ENCODE measurements at regions of chr1 and their contacts with region 1.

Region 1: DNA sequence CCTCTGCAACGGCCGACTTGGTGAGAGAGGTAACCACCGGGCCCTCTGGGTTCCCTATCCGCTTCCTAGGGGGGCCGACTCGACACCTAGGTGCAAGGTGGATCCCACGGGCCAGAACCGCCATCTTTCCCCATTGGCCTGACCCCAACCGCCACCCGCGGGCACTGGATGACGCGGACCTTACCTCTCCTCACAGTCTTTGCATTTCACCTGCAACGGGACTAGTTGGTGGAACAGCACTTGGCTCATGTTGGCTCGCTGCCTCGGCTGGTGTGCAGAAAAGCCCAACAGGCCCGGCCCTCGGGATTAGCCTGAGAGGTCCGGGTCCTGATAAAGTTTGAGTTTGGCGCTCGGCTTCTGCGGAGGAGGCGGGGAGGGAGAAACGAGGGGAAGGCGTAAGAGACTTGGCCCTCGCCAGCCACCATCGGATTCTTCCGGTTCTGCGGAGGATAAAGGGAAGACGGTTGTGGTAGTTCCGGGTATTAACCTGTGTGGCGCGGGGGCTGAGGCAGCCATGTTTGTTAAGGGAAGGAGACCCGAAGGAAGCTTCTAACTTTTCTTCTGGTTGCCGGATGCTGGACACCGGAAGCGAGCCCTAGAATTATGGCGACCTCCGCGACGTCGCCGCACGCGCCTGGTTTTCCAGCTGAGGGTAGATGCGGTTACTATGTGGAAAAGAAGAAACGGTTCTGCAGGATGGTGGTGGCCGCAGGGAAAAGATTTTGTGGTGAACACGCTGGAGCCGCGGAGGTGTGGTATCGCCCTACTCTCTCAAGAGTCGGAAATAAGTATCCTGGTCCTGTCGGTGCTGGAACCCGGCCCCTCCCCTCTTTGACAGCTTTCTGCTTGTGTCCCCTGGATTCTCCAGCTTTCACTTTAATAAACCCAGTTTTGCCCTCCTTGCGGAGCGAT is at the starts of genes SASS6 and TRMT13:
- DNase-seq: peak; percentile 97
- H3K4me3 ChIP-seq: peak within 1 kb of the TSS; percentile 61 to 99 (median 85)
- H3K27ac ChIP-seq: peak within 1 kb of the TSS; percentile 58
- H3K4me1 ChIP-seq: peaks cover 24% of the 10 kb centered on the region
- H3K27me3 ChIP-seq: no peaks in the 10 kb centered on the region
- CTCF ChIP-seq: no peak
- POLR2A ChIP-seq: peak; percentile 80
- total RNA-seq, gene SASS6: 6.5 and 7.3 TPM in 2 replicates
- total RNA-seq, gene TRMT13: 12.7 and 14.1 TPM in 2 replicates

Region 2: GRCh38 chr1:99808391-99809115 is 324.3 kb before region 1 on chr1:
- CTCF ChIA-PET with region 1: no interaction called
- POLR2A ChIA-PET with region 1: no interaction called
- dilution Hi-C with region 1: no loop called
- intact Hi-C with region 1: loop called (anchors 5 kb)
- DNase-seq: peak; percentile 87
- H3K4me3 ChIP-seq: peak overlapping the region in 1 of 3 experiments; percentile 15
- H3K27ac ChIP-seq: no peak overlapping the region
- H3K4me1 ChIP-seq: peaks cover 8% of the 10 kb centered on the region
- H3K27me3 ChIP-seq: peaks cover 15 to 21% of the 10 kb centered on the region in 2 experiments
- CTCF ChIP-seq: peak; percentile 23 to 41
- POLR2A ChIP-seq: no peak

Region 3: GRCh38 chr1:100037927-100038659 is 94.7 kb before region 1 on chr1:
- CTCF ChIA-PET with region 1: no interaction called
- POLR2A ChIA-PET with region 1: no interaction called
- dilution Hi-C with region 1: no loop called
- intact Hi-C with region 1: loop called (anchors 1 kb)
- DNase-seq: peak; percentile 87
- H3K4me3 ChIP-seq: peak overlapping the region; percentile 80 to 99 (median 95)
- H3K27ac ChIP-seq: peak overlapping the region; percentile 96
- H3K4me1 ChIP-seq: peaks cover 24% of the 10 kb centered on the region
- H3K27me3 ChIP-seq: no peaks in the 10 kb centered on the region
- CTCF ChIP-seq: no peak
- POLR2A ChIP-seq: peak; percentile 96

Region 4: GRCh38 chr1:100107696-100108095 is 25.1 kb before region 1 on chr1:
- CTCF ChIA-PET with region 1: no interaction called
- POLR2A ChIA-PET with region 1: no interaction called
- dilution Hi-C with region 1: no loop called
- intact Hi-C with region 1: no loop called
- DNase-seq: no peak
- H3K4me3 ChIP-seq: no peak overlapping the region
- H3K27ac ChIP-seq: no peak overlapping the region
- H3K4me1 ChIP-seq: no peaks in the 10 kb centered on the region
- H3K27me3 ChIP-seq: no peaks in the 10 kb centered on the region
- CTCF ChIP-seq: no peak
- POLR2A ChIP-seq: no peak

Region 5: DNA sequence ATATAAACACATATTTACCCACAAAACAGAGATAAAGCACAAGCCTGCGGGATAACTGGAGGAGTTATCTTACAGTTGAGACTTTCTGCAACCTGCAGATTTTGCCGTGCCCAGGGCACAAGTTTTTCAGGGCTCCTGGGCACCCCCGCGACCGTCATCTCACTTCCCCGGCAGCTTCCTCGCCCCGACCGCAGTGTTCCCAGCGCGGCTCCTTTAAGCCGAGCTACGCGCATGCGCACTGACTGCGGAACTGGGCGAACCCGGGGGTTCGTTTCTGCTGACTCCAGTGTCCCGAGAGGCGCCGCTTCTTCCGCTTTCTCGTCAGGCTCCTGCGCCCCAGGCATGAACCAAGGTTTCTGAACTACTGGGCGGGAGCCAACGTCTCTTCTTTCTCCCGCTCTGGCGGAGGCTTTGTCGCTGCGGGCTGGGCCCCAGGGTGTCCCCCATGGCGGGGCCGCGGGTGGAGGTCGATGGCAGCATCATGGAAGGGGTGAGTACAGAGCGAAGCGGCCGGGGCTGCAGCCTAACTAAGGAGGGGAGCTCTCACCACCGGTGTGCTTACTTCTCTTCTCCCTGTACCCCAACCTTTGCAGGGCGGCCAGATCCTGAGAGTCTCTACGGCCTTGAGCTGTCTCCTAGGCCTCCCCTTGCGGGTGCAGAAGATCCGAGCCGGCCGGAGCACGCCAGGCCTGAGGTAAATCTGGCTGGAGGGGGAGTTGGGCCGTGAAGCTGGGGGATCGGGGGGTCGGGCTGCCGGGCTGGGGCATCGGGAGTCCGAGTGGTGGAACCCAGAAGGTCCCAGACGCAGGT is 133.3 kb after region 1 on chr1 and contains the start of gene RTCA:
- CTCF ChIA-PET with region 1: no interaction called
- POLR2A ChIA-PET with region 1: no interaction called
- dilution Hi-C with region 1: no loop called
- intact Hi-C with region 1: loop called (anchors 1 kb)
- DNase-seq: peak; percentile 92
- H3K4me3 ChIP-seq: peak within 1 kb of the TSS; percentile 67 to 92 (median 86)
- H3K27ac ChIP-seq: peak within 1 kb of the TSS; percentile 41
- H3K4me1 ChIP-seq: peaks cover 19% of the 10 kb centered on the region
- H3K27me3 ChIP-seq: no peaks in the 10 kb centered on the region
- CTCF ChIP-seq: no peak
- POLR2A ChIP-seq: peak; percentile 90
- total RNA-seq, gene RTCA: 44.8 and 46.6 TPM in 2 replicates

Region 6: GRCh38 chr1:100351095-100351891 is 218.5 kb after region 1 on chr1:
- CTCF ChIA-PET with region 1: no interaction called
- POLR2A ChIA-PET with region 1: no interaction called
- dilution Hi-C with region 1: no loop called
- intact Hi-C with region 1: loop called (anchors 1 kb)
- DNase-seq: peak; percentile 96
- H3K4me3 ChIP-seq: peak overlapping the region; percentile 77 to 97 (median 84)
- H3K27ac ChIP-seq: peak overlapping the region; percentile 84
- H3K4me1 ChIP-seq: peaks cover 33% of the 10 kb centered on the region
- H3K27me3 ChIP-seq: no peaks in the 10 kb centered on the region
- CTCF ChIP-seq: peak; percentile 18 to 41
- POLR2A ChIP-seq: peak; percentile 89

Region 7: GRCh38 chr1:100895540-100896483 is 763.0 kb after region 1 on chr1 and contains the start of gene SLC30A7:
- CTCF ChIA-PET with region 1: no interaction called
- POLR2A ChIA-PET with region 1: no interaction called
- dilution Hi-C with region 1: no loop called
- intact Hi-C with region 1: loop called (anchors 10 kb)
- DNase-seq: peak; percentile 90
- H3K4me3 ChIP-seq: peak within 1 kb of the TSS; percentile 87 to 91 (median 91)
- H3K27ac ChIP-seq: peak within 1 kb of the TSS; percentile 93
- H3K4me1 ChIP-seq: peaks cover 26% of the 10 kb centered on the region
- H3K27me3 ChIP-seq: no peaks in the 10 kb centered on the region
- CTCF ChIP-seq: no peak
- POLR2A ChIP-seq: peak; percentile 87
- total RNA-seq, gene SLC30A7: 38.6 and 39.0 TPM in 2 replicates